ENCODE measurements at regions of chr7 and their contacts with region 1.

Region 1: DNA sequence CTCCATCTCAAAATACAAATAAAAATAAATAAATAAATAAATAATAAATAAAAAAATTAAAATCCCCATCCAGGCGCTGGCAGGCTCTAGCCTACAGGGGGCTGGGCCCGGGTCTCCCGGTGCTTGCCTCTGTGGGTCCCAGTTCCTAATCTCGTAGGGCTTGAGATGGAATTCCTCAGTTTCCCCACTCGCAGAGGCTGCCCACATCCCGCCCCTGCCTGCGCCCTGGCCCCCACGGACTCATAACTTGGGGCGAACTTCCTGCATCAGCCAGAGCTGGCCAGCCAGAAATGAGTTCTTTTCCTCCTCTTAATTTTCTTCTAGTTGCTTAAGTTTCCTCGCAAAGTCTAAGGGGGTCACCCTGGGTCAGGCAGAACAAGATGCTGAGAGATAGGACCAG is 22.0 kb upstream of the SRRM3 start:
- DNase-seq: no peak
- ATAC-seq: no peak
- H3K4me3 Mint-ChIP-seq: no peak overlapping the region
- H3K27ac Mint-ChIP-seq: no peak overlapping the region
- H3K4me1 Mint-ChIP-seq: peaks cover 5% of the 10 kb centered on the region
- H3K27me3 Mint-ChIP-seq: no peaks in the 10 kb centered on the region

Region 2: DNA sequence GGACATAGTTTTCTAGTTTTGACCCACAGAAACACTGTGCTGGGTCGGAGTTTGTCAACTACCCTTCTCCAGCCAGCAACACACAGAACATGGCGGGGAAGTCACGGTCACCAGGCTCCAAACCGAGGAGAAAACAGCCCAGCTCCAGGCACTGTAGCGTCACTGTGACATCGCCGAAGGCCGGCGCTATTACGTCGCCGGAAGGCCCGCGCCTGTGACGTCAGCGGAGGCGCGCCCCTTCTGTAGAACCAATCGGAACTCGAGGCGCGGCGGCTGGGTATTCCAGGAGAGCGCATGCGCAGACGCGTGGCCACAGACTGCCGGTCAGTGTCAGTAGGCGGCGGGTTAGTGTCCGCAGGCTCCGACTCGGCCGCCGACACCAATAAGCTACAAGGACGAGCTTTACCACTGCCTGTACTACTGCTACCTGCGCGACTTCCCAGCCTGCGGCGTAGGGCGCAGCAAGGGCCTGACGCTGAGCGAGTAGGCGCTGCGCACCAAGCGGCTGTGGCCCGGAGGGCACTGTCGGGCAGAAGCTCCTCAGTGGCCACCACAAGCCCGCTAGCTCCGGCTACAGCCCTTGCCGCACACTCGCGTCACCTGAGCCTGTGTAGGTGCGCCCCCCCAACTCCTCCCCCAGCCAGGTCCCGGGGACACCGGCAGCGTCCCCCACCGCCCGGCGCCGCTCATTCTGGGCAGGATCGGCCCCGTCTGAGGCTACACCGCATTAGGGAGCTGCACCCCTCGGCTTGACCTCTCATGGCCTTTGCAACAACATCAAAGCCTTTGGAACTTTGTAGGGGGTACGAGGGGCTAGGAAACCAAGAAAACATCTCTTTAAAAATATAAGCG is 13.1 kb before region 1 on chr7:
- CTCF ChIA-PET with region 1: interaction called, 34 read pairs
- POLR2A ChIA-PET with region 1: no interaction called
- DNase-seq: peak; percentile 94
- ATAC-seq: peak; percentile 93
- H3K4me3 Mint-ChIP-seq: peak overlapping the region; percentile 84
- H3K27ac Mint-ChIP-seq: peak overlapping the region; percentile 93
- H3K4me1 Mint-ChIP-seq: peaks cover 4% of the 10 kb centered on the region
- H3K27me3 Mint-ChIP-seq: no peaks in the 10 kb centered on the region

Region 3: DNA sequence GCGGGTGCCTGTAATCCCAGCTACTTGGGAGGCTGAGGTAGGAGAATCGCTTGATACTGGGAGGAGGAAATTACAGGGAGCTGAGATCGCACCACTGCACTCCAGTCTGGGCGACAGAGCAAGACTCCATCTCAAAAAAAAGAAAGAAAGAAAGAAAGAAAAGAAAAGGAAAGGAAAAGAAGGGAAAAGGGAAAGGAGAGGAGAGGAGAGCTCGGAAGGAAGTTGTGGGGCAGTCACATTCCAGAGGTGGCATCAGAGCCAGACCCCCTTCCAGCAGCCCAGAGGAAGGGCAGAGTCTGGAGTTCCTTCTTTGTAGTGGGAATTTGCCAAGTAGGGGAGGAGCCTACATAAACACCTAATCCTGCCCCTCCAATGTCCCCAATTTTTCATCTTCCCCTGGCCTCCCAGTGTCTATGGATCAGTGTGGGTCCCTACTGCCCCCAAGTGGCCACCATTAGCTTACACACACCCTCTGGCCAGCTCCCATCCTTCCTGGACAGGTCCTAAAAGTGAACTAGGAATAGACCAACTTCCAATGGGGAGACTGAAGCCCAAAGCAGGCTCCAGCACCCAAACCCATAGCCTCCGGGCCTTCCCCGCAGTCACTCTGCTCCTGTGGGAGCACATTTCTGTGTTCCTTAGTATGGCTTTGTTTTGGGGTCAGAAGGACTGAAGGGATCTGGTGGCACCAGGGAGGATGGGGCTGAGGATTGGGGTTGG is 83.2 kb after region 1 on chr7:
- CTCF ChIA-PET with region 1: interaction called, 39 read pairs
- POLR2A ChIA-PET with region 1: no interaction called
- DNase-seq: peak; percentile 52
- ATAC-seq: no peak
- H3K4me3 Mint-ChIP-seq: no peak overlapping the region
- H3K27ac Mint-ChIP-seq: no peak overlapping the region
- H3K4me1 Mint-ChIP-seq: peaks cover 6% of the 10 kb centered on the region
- H3K27me3 Mint-ChIP-seq: peaks cover 11% of the 10 kb centered on the region

Region 4: DNA sequence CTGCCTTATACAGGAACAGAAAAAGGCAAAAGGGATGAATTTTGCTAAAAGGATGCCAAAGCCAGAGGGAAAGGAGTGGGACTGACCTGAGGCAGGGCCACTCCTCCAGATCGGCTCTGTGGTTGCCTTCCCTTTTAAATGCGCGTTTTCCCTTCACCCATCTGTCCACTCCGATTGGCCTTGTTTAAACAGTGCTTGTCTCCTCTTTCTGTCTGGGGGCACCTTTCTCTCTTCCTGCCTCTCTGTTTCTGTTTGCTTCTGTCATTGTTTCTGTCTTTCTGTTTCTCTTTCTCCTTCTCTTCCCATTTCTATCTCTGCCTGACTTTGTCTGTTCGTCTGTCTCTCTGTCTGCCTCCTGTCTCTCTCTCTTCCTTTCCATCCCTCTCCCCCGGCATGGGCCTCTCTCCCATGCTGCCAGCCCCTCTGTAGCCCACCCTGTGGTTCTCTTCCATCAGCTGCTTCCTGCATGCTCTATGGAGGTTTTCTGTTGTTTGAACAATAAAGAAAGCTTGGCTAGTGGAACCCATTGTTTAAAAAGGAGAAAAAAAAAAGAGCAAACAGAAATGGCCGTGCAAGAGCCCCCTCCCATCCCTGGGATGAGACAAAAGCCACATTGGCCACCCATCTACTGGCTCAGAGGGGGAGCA is 93.3 kb after region 1 on chr7:
- CTCF ChIA-PET with region 1: interaction called, 10 read pairs
- POLR2A ChIA-PET with region 1: no interaction called
- DNase-seq: no peak
- ATAC-seq: peak; percentile 37
- H3K4me3 Mint-ChIP-seq: peak overlapping the region; percentile 16
- H3K27ac Mint-ChIP-seq: peak overlapping the region; percentile 72
- H3K4me1 Mint-ChIP-seq: peaks cover 24% of the 10 kb centered on the region
- H3K27me3 Mint-ChIP-seq: peaks cover 18% of the 10 kb centered on the region

Measured in activated CD8-positive, alpha-beta T cell treated with anti-CD3 and anti-CD28 coated beads, Interleukin-2, amount 10 ng/mL, durations not matched to agents 7 days and 5 days (primary cell).